Activated CD4-positive, alpha-beta T cell treated with anti-CD3 and anti-CD28 coated beads, Interleukin-2, amount 10 ng/mL, durations not matched to agents 7 days and 5 days (primary cell): ENCODE measurements at regions of chr17 and their contacts with region 1.

Region 1: DNA sequence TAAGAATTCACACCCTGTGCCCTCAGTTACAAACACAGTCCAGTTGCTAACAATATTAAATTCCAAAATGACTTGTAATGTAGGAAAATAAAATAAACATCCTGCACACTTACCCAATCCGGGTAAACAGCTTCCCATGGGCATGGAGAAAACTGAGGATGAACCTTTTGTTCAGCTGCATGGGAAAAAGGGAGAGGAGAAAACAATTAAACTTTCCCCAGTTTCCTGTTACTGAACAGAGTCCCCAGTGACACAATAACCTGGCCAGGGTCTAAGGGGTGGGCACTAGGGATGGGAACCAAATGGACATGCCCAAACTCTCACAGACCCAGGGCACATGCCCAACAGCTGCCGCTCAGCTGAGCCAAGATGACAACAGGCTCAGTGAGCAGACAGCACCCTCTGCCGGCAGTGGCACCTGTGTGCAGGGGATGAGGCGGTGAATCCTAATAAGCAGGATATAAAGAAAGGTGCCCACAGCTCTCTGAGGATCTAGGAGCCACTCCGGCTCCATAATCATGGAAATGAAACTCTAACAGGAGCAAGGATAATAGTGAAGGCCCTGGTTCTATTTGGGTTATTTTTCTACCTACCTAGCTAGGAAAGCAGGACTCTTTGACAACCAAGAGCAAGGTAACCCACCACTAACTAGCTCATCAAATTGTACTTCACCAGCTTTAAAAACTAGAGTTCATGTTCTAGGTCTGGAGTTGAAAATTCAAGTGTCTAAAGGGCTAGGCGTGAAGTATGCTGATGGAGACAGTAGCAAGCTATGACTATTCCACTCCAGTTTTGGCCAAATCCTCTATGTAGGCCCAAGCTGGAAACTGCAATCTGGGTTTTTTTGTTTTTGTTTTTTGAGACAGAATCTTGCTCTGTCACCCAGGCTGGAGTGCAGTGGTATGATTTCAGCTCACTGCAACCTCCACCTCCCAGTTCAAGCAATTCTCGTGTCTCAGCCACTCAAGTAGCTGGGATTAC is 58.8 kb downstream of the SMG6 start:
- DNase-seq: peak; percentile 90
- H3K4me3 Mint-ChIP-seq: no peak overlapping the region
- H3K27ac Mint-ChIP-seq: peak overlapping the region; percentile 78
- H3K4me1 Mint-ChIP-seq: peaks cover 81% of the 10 kb centered on the region
- H3K27me3 Mint-ChIP-seq: no peaks in the 10 kb centered on the region

Region 2: GRCh38 chr17:2049333-2050299 is 195.2 kb before region 1 on chr17:
- CTCF ChIA-PET with region 1: interaction called, 210 read pairs
- POLR2A ChIA-PET with region 1: interaction called, 4 read pairs
- DNase-seq: peak; percentile 88
- H3K4me3 Mint-ChIP-seq: peak overlapping the region; percentile 69
- H3K27ac Mint-ChIP-seq: peak overlapping the region; percentile 46
- H3K4me1 Mint-ChIP-seq: peaks cover 27% of the 10 kb centered on the region
- H3K27me3 Mint-ChIP-seq: peaks cover 17% of the 10 kb centered on the region

Region 3: GRCh38 chr17:2070241-2071023 is 174.4 kb before region 1 on chr17:
- CTCF ChIA-PET with region 1: interaction called, 54 read pairs
- POLR2A ChIA-PET with region 1: no interaction called
- DNase-seq: peak; percentile 76
- H3K4me3 Mint-ChIP-seq: no peak overlapping the region
- H3K27ac Mint-ChIP-seq: peak overlapping the region; percentile 74
- H3K4me1 Mint-ChIP-seq: peaks cover 65% of the 10 kb centered on the region
- H3K27me3 Mint-ChIP-seq: no peaks in the 10 kb centered on the region

Region 4: DNA sequence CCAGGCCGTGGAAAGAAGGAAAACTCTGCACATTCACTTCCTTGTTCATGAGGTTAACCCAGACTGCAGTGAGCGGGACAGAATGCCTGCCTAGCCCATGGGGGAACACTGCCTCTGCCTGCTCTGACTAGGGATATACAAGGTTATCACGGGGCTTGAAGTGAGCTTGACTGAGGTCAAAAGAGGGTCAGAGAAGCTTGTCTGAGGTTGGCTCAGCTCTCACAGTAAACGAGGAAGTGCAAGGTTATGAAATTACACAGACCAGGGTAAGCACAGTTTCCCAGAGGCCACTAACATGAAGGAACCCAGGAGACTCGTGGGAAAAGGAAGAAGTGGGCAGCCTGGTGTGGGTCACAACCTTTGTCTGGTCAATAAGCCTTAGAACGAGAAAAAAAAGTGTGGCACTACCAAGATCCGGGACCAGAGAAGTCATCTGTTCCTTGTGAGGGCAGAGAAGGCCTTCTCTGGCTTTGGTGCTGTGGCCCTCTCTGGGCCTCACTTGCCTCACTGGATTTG is 161.2 kb before region 1 on chr17:
- CTCF ChIA-PET with region 1: interaction called, 20 read pairs
- POLR2A ChIA-PET with region 1: no interaction called
- DNase-seq: no peak
- H3K4me3 Mint-ChIP-seq: no peak overlapping the region
- H3K27ac Mint-ChIP-seq: no peak overlapping the region
- H3K4me1 Mint-ChIP-seq: peaks cover 70% of the 10 kb centered on the region
- H3K27me3 Mint-ChIP-seq: no peaks in the 10 kb centered on the region

Region 5: GRCh38 chr17:2222901-2223616 is 21.8 kb before region 1 on chr17:
- CTCF ChIA-PET with region 1: interaction called, 19 read pairs
- POLR2A ChIA-PET with region 1: no interaction called
- DNase-seq: peak; percentile 44
- H3K4me3 Mint-ChIP-seq: no peak overlapping the region
- H3K27ac Mint-ChIP-seq: peak overlapping the region; percentile 5
- H3K4me1 Mint-ChIP-seq: peaks cover 45% of the 10 kb centered on the region
- H3K27me3 Mint-ChIP-seq: no peaks in the 10 kb centered on the region

Region 6: DNA sequence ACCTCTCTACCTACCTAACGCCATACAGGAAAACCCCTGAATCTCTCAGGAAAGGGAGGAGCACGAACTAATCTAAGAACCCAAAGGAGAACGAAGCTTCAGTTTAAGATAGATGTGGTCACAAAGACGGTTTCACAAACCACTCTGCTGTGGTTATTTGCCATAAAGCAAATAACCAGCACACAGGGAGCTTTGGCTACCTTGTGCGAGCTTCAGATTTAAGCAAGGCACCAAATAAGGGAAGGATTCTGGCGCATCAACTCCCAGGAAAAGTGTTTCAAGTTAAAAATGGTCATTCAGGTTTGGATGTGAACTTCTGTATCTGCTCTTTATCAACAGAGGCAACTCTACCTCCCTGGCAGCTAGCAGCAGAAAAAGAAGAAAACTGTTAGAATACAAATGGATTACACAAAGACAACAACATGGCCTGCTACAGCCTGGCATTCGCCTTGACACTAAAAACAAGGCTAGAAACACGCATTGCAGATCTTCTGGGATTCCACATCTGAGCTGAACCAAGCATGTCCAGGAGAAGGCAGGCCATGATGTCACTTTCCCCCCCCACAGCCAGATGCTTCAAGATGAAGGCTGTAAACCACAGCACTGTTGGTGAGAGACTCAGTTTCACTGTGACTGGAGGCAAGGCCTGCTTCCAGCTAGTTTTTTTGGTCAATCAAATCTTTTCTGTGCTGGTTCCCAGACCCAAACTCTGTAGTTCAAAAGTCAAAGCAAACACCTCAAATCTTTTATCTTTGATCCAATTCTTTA is 15.1 kb after region 1 on chr17:
- CTCF ChIA-PET with region 1: interaction called, 35 read pairs
- POLR2A ChIA-PET with region 1: no interaction called
- DNase-seq: peak; percentile 85
- H3K4me3 Mint-ChIP-seq: peak overlapping the region; percentile 77
- H3K27ac Mint-ChIP-seq: peak overlapping the region; percentile 91
- H3K4me1 Mint-ChIP-seq: peaks cover 82% of the 10 kb centered on the region
- H3K27me3 Mint-ChIP-seq: no peaks in the 10 kb centered on the region

Region 7: DNA sequence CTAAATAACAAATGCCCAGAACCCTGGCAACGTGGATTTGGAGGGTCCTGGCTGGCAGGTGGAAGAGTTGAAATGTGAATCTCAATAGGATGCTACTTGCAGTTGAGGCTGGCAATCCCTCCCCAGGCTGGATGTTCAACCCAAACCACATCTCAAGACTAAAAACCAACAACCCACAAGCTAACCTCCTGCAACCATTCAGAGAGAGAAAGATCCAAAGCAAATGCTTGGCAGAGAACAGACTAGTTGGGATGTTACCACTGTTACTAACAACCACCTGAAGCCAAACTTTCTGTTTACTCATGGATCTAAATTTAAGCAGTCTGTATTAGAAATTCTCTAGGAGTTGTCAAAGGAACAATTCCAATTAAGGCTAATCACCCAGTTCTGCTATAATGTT is 30.9 kb after region 1 on chr17:
- CTCF ChIA-PET with region 1: interaction called, 25 read pairs
- POLR2A ChIA-PET with region 1: interaction called, 3 read pairs
- DNase-seq: peak; percentile 66
- H3K4me3 Mint-ChIP-seq: peak overlapping the region; percentile 40
- H3K27ac Mint-ChIP-seq: peak overlapping the region; percentile 81
- H3K4me1 Mint-ChIP-seq: peaks cover 70% of the 10 kb centered on the region
- H3K27me3 Mint-ChIP-seq: no peaks in the 10 kb centered on the region